ENCODE measurements at regions of chr3 and their contacts with region 1.

Region 1: GRCh38 chr3:21705769-21706168 is 45.2 kb downstream of the ZNF385D start:
- DNase-seq: no peak
- ATAC-seq: no peak

Region 2: DNA sequence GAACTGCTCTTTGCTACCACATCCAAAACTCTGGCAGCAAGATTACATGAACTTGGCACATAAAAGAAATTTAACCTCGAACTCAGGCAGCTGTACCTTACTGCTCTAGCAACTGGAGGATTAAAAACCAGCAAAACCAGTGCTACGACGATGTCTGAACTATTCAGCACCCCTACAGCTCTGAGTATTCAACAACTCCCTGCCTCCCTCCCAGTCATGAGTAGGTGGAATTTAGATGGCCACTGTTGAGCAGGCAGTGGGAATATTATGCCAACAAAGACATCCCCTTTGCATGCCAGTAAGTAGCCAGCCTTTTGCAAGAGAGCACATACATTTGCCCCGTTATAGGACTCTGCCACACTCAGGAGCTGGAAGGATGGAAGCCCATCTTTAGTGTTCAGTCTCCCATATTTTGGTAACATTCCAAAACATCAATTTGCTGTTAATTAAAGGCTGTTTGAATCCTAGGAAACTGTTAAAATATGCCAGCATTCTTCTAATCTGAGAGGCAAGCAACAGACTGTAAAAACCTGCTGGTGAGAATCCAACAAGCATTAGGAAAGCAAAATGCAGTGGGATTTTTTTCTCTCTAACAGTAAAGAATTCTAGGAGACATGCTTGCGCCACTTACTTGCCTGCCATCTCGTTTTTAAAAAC is 40.2 kb before region 1 on chr3:
- intact Hi-C with region 1: no loop called
- DNase-seq: no peak
- ATAC-seq: no peak

Region 3: DNA sequence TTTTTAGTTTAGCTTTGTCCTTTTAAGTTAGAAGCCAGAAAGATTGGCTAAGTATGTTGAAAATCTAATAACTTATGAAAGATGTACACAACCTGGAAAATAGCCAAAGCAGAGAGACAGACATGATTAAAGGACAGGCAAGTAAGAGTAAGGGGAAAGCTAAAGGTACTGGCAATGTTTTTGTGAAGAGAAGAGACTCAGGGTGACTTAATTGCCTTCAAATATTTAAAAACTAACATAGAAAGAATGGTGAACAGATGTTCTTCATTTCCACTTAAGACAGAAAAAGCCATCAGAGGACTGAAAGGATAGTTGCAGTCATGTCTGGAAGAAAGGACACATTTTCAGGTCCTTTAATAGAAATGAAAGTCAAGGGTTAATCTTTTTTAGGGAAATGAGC is 23.6 kb before region 1 on chr3:
- intact Hi-C with region 1: loop called (anchors 1 kb)
- DNase-seq: no peak
- ATAC-seq: no peak